ENCODE measurements at regions of chr7 and their contacts with region 1.

Region 1: DNA sequence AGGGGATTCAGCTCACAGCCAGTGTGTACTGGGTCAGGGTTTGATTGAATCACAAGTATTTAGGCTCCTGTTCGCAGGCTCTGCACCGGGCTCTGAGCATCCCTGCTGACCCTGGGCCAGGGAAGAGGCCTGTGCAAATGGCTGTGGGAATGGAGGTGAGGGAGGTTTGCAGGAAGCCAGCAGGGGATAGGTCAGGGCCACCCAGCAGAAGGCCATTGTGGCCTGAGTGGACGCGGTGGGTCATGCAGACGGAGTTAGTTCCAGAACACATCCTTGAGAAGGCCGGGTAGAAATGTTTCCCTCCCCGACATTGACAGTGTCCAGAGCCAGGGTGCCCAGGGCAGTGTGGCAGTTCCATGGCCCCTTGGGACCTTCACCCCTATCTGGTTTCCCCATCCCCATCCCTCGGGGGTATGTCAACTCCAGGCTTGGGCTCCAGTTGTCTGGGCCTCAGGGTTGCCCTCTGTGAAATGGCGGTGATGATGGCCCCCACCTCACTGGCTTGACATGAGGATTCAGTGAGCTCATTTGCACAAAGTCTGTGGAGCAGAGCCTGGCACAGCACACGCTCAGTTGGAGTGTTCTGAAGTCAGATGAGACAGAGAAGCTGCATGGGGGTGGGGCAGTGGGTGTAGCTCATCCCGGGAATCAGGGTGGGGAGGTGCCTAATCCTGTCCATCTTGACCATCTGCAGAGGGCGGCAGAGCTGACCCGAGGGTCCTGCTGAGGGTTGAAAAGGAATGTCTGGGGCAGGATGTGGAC is 107.6 kb downstream of the ADCY1 start:
- DNase-seq: no peak
- ATAC-seq: no peak
- H3K4me3 ChIP-seq: no peak overlapping the region
- H3K27ac ChIP-seq: no peak overlapping the region
- H3K4me1 ChIP-seq: no peaks in the 10 kb centered on the region
- H3K27me3 ChIP-seq: no peaks in the 10 kb centered on the region
- CTCF ChIP-seq: no peak

Region 2: DNA sequence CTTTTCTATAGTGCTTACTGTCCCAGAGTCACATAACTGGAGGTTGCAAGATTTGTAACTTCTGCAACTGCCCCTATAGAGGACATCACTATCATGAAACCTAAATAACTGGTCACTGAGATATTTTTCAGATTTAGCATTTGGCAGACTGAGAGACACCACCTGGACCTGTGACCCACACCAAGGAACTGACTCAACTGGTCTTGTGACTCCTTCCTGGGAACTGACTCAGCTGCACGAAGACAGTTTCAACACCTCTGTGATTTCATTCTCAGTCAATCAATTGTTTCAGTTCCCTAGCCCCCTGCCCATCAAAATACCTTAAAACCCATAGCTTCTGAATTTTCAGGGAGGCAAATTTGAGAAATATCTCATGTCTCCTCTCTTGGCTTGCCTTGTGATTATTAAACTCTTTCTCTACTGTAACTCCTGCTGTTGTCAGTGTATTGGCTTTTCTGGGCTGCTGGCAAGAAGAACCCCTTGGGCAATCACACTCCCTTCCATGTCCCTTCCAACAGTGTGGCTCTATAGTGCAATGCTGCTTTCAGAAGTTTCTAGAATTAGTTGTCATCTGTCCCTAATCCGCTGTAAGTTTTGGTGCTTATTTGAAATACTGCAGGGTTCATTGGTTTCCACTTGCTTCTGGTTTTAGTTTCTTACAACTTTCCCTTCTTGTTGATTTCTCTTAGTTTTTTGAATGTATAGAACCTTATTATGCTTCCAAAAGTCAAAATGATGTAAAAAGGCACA is 235.4 kb before region 1 on chr7:
- CTCF ChIA-PET with region 1: no interaction called
- POLR2A ChIA-PET with region 1: no interaction called
- intact Hi-C with region 1: no loop called
- DNase-seq: peak; percentile 67
- ATAC-seq: peak; percentile 73
- H3K4me3 ChIP-seq: no peak overlapping the region
- H3K27ac ChIP-seq: peak overlapping the region; percentile 52
- H3K4me1 ChIP-seq: peaks cover 19% of the 10 kb centered on the region
- H3K27me3 ChIP-seq: no peaks in the 10 kb centered on the region
- CTCF ChIP-seq: no peak

Region 3: GRCh38 chr7:45696476-45696875 is 14.7 kb after region 1 on chr7:
- CTCF ChIA-PET with region 1: interaction called, 13 read pairs
- POLR2A ChIA-PET with region 1: no interaction called
- intact Hi-C with region 1: no loop called
- DNase-seq: no peak
- ATAC-seq: no peak
- H3K4me3 ChIP-seq: no peak overlapping the region
- H3K27ac ChIP-seq: no peak overlapping the region
- H3K4me1 ChIP-seq: no peaks in the 10 kb centered on the region
- H3K27me3 ChIP-seq: peaks cover 12% of the 10 kb centered on the region; the same call in 1 of the 2 replicates
- CTCF ChIP-seq: no peak

Measured in PC-3 (cell line).